ENCODE measurements at regions of chr14 and their contacts with region 1.

Region 1: DNA sequence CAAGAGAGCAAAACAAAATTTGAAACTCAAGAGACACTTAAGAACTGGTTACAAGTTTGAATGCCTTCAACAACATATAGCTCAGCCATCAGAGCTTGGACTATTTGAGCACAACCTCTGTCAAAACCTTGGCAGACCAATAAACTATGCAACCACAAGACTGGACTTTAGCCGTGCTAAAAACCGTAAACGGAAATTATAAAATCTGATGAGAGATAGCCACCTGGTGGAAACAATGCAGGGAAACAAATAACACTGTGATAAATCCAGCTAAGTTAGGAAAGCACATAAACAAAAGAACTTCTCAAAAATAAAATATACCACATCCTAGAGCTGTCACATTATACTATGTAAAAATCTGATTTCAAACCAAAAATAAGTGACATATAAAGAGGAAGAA is 1074.2 kb upstream of the NOVA1 start:
- DNase-seq: no peak

Region 2: DNA sequence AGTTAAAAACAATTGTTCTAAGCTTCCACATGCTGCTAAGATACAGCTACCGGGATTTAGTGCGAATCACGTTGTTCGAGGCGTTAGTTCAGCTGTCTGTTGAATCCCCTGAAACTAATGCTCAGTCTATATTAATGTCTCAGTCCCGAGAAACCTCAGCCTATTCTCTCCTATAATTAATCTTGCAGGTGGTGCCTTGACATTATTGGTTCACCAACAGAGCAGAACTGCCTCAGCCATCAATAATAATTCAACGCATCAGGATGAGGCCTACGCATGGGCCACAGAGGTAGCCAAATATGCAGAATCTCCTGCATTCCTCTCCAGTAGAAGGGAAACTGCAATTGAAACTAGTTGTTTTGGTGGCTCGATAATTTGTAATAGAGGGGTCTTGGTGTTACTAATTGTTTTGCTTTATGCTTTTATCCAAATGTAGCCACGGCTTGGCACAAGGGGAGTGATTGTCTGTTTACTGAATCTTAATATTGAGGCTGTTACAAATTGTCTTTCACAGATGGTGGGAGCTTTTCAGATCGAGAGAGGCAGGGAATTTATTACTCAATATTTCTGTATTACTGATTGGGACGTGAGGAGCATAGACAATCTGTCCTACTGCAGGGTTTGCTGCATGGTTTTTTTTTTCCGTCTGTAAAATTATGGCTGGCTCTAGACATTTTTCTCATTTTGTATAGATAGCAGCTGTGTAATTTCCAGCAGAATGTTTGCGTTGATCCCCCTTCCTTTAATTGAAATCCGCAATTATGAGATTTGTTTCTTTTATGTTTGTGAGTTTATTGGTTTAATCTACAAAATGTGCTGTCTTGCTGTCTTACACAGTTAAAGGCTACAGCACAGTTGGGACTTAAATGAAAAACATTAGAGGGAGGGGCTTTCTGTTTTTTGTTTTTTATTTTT is 37.7 kb before region 1 on chr14:
- intact Hi-C with region 1: loop called in 1 of 2 experiments (anchors 2 kb)
- DNase-seq: no peak

Measured in posterior vena cava (tissue), 2 donors.